A673 (cell line): ENCODE measurements at regions of chr1 and their contacts with region 1.

Region 1: DNA sequence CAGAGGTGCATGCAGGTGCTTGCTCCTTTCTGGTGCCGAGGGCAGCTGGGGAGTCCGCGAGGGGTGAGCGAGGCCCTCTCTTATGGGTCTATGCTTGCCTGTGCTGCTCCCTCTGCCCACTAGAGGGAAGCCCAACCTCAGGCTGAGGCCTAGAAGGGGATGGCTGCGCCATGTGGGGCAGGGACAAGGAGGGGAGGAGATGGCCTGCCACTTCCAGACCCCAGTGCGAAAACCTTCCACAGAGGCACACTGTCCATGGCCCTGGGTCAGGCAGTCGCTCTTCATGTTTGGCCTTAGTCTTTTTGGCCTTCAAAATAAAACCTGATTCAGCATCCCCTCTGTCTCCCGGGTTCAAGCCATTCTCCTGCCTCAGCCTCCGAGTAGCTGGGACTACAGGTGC is 14.0 kb downstream of the RHBG start:
- DNase-seq: peak; percentile 80
- H3K4me3 ChIP-seq: no peak overlapping the region
- H3K27ac ChIP-seq: no peak overlapping the region
- H3K4me1 ChIP-seq: no peaks in the 10 kb centered on the region
- H3K27me3 ChIP-seq: peaks cover 4% of the 10 kb centered on the region
- CTCF ChIP-seq: peak; percentile 87

Region 2: DNA sequence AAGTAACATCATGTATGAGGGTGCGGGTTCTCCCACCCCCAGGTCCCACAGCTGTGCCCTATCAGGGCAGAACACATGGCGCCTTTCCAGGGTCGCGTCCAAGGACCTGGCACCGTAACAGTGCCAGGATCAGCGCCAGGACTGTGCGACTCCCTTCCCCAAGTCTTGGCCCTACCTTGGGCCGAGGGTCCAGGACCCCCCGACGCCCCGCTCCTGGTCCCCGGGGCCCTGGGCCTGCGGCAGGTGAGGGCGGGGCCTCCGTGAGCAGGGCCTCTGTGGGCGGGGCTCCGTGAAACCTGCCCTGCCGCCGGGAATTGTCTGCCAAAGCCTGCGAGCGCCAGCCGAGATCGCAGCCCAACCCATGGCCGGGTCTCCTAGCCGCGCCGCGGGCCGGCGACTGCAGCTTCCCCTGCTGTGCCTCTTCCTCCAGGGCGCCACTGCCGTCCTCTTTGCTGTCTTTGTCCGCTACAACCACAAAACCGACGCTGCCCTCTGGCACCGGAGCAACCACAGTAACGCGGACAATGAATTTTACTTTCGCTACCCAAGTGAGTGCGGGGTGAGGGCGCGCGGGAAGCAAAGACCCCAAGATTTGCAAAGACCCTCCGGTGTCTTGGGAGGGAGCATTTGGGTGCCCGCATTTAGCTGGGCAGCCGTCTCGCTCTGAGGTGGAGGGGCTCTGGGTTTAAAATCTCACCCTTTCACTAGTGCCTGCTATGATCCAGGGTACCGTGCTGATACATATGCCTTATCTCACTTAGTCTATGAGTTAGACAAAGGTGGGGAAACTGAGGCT is 13.9 kb before region 1 on chr1 and contains the start of gene RHBG:
- CTCF ChIA-PET with region 1: interaction called, 10 read pairs
- POLR2A ChIA-PET with region 1: no interaction called
- intact Hi-C with region 1: no loop called
- DNase-seq: no peak
- H3K4me3 ChIP-seq: peak within 1 kb of the TSS; percentile 35
- H3K27ac ChIP-seq: no peak within 1 kb of the TSS
- H3K4me1 ChIP-seq: no peaks in the 10 kb centered on the region
- H3K27me3 ChIP-seq: no peaks in the 10 kb centered on the region
- CTCF ChIP-seq: no peak
- total RNA-seq, gene RHBG: not detected in 2 replicates

Region 3: GRCh38 chr1:156421062-156421938 is 38.3 kb after region 1 on chr1:
- CTCF ChIA-PET with region 1: interaction called, 14 read pairs
- POLR2A ChIA-PET with region 1: no interaction called
- intact Hi-C with region 1: no loop called
- DNase-seq: peak; percentile 86
- H3K4me3 ChIP-seq: peak overlapping the region; percentile 38
- H3K27ac ChIP-seq: no peak overlapping the region
- H3K4me1 ChIP-seq: peaks cover 14% of the 10 kb centered on the region
- H3K27me3 ChIP-seq: peaks cover 86% of the 10 kb centered on the region
- CTCF ChIP-seq: no peak

Region 4: DNA sequence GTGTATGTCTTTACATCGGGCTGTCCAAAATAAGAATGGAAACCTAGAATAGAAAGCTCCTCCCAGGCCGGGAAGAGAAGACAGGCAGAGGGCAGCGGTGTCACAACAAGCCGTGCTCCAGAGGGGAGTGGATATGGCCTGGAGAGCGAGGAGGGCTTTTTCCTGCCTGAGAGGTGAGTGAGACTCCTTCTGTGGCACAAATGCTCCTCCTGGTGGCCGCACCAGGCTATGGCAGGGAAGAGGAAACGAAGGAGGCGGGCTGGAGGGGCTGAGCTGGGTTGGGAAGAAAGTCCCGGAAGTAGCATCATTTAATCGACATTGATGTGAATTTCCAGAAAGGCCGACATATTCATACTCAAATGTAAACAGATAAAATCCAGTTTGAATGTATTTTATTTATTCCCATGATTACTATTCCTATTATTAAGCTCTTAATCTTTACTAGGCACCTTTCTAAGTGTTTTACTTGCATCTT is 62.8 kb after region 1 on chr1:
- CTCF ChIA-PET with region 1: interaction called, 98 read pairs
- POLR2A ChIA-PET with region 1: no interaction called
- intact Hi-C with region 1: loop called (anchors 1 kb)
- DNase-seq: peak; percentile 92
- H3K4me3 ChIP-seq: no peak overlapping the region
- H3K27ac ChIP-seq: no peak overlapping the region
- H3K4me1 ChIP-seq: no peaks in the 10 kb centered on the region
- H3K27me3 ChIP-seq: peaks cover 13% of the 10 kb centered on the region
- CTCF ChIP-seq: peak; percentile 97

Region 5: DNA sequence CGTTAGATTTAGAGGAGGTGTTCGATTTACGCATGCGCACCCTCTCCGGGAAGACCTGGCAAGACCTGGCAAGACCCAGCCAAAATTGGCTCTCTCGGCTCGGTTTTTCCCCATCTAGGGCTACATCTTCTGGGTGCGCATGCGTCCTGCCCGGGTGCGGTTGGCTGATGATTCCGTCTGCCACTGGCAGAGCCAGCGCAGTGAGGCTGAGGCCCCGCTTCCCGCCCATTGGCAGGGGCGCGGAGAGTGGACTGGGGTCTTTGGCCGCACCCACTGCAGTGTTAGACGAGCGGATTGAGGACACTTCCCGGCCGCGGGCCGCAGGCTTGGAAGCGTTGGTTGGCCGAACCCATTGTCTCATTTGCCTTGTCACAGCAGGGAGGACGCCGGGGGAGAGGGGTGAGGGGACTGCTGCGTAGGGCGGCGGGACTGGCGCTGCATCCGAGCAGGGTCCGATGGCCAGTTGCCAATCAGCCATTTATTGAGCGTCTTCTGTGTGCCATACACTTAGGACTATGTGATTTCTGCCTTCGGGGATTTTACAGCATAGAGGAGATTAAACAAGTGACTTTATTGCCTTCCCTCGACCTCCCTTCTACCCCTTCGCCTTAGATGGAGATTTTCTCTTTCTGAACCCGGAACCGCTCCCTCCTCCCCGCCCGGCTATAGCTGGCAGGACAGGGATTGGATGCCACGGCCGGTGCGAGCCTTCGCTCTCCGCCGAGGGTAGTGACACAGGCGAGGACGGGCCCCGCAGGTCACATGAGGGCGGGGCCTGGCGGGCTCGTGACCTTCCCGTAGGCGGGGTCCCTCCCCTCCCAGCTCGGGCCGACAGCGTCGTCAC is 73.8 kb after region 1 on chr1:
- CTCF ChIA-PET with region 1: interaction called, 10 read pairs
- POLR2A ChIA-PET with region 1: no interaction called
- intact Hi-C with region 1: no loop called
- DNase-seq: peak; percentile 96
- H3K4me3 ChIP-seq: peak overlapping the region; percentile 45
- H3K27ac ChIP-seq: peak overlapping the region; percentile 8
- H3K4me1 ChIP-seq: no peaks in the 10 kb centered on the region
- H3K27me3 ChIP-seq: no peaks in the 10 kb centered on the region
- CTCF ChIP-seq: no peak

Region 6: GRCh38 chr1:156480411-156481192 is 97.6 kb after region 1 on chr1:
- CTCF ChIA-PET with region 1: interaction called, 11 read pairs
- POLR2A ChIA-PET with region 1: no interaction called
- intact Hi-C with region 1: no loop called
- DNase-seq: peak; percentile 83
- H3K4me3 ChIP-seq: no peak overlapping the region
- H3K27ac ChIP-seq: no peak overlapping the region
- H3K4me1 ChIP-seq: no peaks in the 10 kb centered on the region
- H3K27me3 ChIP-seq: no peaks in the 10 kb centered on the region
- CTCF ChIP-seq: peak; percentile 83

Region 7: DNA sequence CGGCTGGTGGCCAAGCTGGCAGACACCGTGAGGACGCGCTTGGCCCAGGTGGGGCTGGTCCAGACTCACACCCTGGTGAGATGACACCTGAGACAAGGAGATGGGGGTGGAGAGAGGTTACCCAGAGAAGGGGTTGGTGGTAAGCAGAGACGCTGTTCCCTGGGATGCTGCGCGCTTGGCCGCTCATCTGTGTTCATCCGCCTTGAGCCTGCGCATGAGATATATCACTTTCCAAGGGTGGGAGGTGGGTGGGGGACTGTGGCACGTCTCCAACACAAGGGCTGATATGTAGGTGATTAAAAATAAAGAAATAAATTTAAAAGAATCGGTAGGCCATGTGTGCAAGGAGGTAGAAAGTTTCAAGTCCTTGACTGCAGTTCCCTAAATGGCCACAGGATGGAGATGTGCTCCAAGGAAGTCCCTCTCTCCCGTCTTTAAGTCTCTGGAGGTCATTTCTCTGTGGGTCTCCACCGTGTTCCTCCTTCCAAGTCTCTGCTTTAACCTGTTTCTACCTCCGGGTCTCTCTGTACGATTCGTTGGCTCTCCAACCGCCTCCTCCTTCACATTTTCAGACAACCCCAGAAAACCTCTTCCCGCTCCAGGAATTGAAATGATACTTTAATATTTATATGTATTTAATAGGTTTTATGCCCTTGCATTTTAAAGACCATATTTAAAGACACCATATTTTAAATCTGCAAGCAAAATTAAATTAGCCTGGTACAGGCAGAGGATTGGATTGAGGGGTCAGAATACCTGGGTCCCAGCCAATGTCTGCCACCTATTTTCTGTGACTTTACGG is 201.0 kb after region 1 on chr1:
- CTCF ChIA-PET with region 1: no interaction called
- POLR2A ChIA-PET with region 1: no interaction called
- intact Hi-C with region 1: no loop called
- DNase-seq: peak; percentile 86
- H3K4me3 ChIP-seq: no peak overlapping the region
- H3K27ac ChIP-seq: no peak overlapping the region
- H3K4me1 ChIP-seq: no peaks in the 10 kb centered on the region
- H3K27me3 ChIP-seq: no peaks in the 10 kb centered on the region
- CTCF ChIP-seq: peak; percentile 85

Region 8: GRCh38 chr1:156608036-156608674 is 225.1 kb after region 1 on chr1:
- CTCF ChIA-PET with region 1: interaction called, 15 read pairs
- POLR2A ChIA-PET with region 1: no interaction called
- intact Hi-C with region 1: loop called (anchors 5 kb)
- DNase-seq: peak; percentile 80
- H3K4me3 ChIP-seq: no peak overlapping the region
- H3K27ac ChIP-seq: no peak overlapping the region
- H3K4me1 ChIP-seq: no peaks in the 10 kb centered on the region
- H3K27me3 ChIP-seq: no peaks in the 10 kb centered on the region
- CTCF ChIP-seq: peak; percentile 83